ENCODE measurements at regions of chr19 and their contacts with region 1.

Region 1: DNA sequence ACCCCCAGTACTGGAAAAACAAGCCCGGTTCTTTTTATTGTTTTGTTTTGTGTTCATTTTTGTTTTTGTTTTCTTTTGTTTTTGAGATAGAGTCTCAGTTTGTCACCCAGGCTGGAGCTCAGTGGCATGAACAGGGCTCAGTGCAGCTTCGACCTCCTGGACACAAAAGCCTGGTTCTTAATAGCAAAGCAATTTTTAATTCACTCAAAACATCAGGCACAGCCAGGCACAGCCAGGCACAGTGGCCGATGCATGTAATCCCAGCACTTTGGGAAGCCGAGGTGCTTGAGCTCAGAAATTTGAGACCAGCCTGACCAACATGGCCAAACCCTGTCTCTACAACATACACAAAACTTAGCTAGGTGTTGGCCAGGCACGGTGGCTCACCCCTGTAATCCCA is 30.7 kb downstream of the INSR start:
- DNase-seq: no peak
- H3K4me3 ChIP-seq: no peak overlapping the region
- H3K27ac ChIP-seq: peak overlapping the region in 3 of 4 donors; percentile 72 to 86 (median 76)
- H3K4me1 ChIP-seq: peaks cover 0 to 70% (median 60%) of the 10 kb centered on the region in 4 donors
- H3K27me3 ChIP-seq: no peaks in the 10 kb centered on the region
- CTCF ChIP-seq: no peak
- EP300 ChIP-seq: no peak
- POLR2A ChIP-seq: no peak

Region 2: DNA sequence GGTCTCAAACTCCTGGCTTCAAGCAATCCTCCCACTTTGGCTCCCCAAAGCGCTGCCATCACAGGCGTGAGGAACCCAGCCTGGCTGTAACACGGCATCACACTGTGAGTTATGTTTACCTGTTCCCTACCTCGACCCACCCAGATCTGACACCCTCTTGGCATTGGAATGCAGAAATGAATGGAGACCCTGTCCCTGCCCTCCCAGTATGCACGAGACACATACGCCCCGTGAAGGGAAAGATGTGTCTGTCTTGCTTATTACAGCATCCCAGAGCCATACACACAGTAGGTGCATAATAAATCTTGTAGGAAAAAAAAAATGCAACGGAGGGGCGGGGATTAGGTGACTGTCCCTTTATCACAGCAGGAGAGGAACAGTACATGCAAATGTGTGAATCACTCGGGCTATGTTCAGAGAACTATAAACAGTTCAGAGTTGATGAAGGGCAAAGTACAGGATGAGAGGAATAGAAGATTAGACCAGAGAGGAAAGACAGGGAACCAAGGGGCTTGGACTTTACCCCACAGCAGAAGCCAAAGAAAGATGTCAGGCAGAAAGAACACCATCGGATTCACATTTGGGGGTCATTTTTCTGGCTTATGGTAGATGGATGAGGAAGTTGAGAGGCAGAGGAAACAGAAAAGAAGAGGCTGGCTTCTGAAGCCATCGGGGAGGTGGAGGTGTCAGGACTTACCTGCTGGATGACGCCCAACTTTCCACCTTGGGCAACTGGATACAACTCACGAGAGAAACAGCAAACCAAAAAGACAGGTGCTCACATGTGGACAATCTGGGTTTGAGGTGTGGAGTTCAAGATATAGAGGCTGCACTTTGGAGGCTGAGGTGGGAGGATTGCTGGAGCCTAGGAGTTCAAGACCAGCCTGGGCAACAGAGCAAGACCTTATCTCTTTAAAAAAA is 63.6 kb before region 1 on chr19:
- intact Hi-C with region 1: no loop called
- DNase-seq: no peak
- H3K4me3 ChIP-seq: no peak overlapping the region
- H3K27ac ChIP-seq: peak overlapping the region in 2 of 4 donors; percentile 8 to 11
- H3K4me1 ChIP-seq: peaks cover 0 to 30% (median 22%) of the 10 kb centered on the region in 4 donors
- H3K27me3 ChIP-seq: no peaks in the 10 kb centered on the region
- CTCF ChIP-seq: no peak
- EP300 ChIP-seq: no peak
- POLR2A ChIP-seq: no peak

Region 3: GRCh38 chr19:7224209-7224686 is 39.3 kb before region 1 on chr19:
- intact Hi-C with region 1: loop called (anchors 5 kb)
- DNase-seq: peak; percentile 90
- H3K4me3 ChIP-seq: peak overlapping the region in 3 of 4 donors; percentile 16 to 28 (median 28)
- H3K27ac ChIP-seq: peak overlapping the region; percentile 74 to 87 (median 77)
- H3K4me1 ChIP-seq: peaks cover 0 to 54% (median 34%) of the 10 kb centered on the region in 4 donors
- H3K27me3 ChIP-seq: no peaks in the 10 kb centered on the region
- CTCF ChIP-seq: no peak
- EP300 ChIP-seq: no peak
- POLR2A ChIP-seq: no peak

Region 4: GRCh38 chr19:7312816-7313215 is 49.3 kb after region 1 on chr19:
- intact Hi-C with region 1: no loop called
- DNase-seq: no peak
- H3K4me3 ChIP-seq: no peak overlapping the region
- H3K27ac ChIP-seq: no peak overlapping the region
- H3K4me1 ChIP-seq: no peaks in the 10 kb centered on the region
- H3K27me3 ChIP-seq: no peaks in the 10 kb centered on the region
- CTCF ChIP-seq: no peak
- EP300 ChIP-seq: no peak
- POLR2A ChIP-seq: no peak